Ascending aorta (tissue), 2 donors: ENCODE measurements at regions of chr7 and their contacts with region 1.

Region 1: DNA sequence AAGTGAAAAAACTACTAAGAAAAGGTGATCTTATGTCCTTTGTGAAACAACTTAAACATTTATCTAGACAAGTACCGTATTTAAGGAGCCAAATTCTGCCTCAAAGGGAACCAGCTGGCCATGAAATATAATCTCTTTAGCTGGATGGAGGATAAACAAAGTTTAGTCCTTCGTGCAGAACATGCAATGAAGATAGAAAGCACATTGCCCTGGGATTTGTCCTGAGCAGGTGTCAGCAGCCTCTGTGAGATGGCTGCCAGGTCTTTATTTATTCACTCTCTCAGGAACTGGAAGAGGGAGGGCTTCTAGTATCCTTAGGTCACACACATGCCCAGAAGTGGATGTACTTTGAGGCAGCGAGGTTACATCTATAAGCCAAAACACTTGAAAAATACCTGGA is 57.4 kb upstream of the CASD1 start:
- DNase-seq: no peak
- H3K4me3 ChIP-seq: no peak overlapping the region
- H3K27ac ChIP-seq: no peak overlapping the region
- H3K4me1 ChIP-seq: no peaks in the 10 kb centered on the region
- H3K27me3 ChIP-seq: no peaks in the 10 kb centered on the region
- CTCF ChIP-seq: no peak

Region 2: GRCh38 chr7:94509879-94510581 is 57.8 kb after region 1 on chr7:
- intact Hi-C with region 1: no loop called
- DNase-seq: peak in 1 of 2 donors; percentile 74
- H3K4me3 ChIP-seq: peak overlapping the region; percentile 87 to 98
- H3K27ac ChIP-seq: peak overlapping the region; percentile 87 to 96
- H3K4me1 ChIP-seq: peaks cover 0 to 3% of the 10 kb centered on the region in 2 donors
- H3K27me3 ChIP-seq: no peaks in the 10 kb centered on the region
- CTCF ChIP-seq: peak in 2 of 3 experiments; percentile 8 to 22

Region 3: GRCh38 chr7:94832051-94832450 is 379.8 kb after region 1 on chr7:
- intact Hi-C with region 1: no loop called
- DNase-seq: no peak
- H3K4me3 ChIP-seq: no peak overlapping the region
- H3K27ac ChIP-seq: no peak overlapping the region
- H3K4me1 ChIP-seq: no peaks in the 10 kb centered on the region
- H3K27me3 ChIP-seq: no peaks in the 10 kb centered on the region
- CTCF ChIP-seq: no peak

Region 4: GRCh38 chr7:95246831-95247370 is 794.7 kb after region 1 on chr7:
- intact Hi-C with region 1: loop called (anchors 10 kb)
- DNase-seq: no peak
- H3K4me3 ChIP-seq: peak overlapping the region in 1 of 2 donors; percentile 25
- H3K27ac ChIP-seq: no peak overlapping the region
- H3K4me1 ChIP-seq: no peaks in the 10 kb centered on the region
- H3K27me3 ChIP-seq: no peaks in the 10 kb centered on the region
- CTCF ChIP-seq: peak; percentile 25 to 72 (median 43)

Region 5: DNA sequence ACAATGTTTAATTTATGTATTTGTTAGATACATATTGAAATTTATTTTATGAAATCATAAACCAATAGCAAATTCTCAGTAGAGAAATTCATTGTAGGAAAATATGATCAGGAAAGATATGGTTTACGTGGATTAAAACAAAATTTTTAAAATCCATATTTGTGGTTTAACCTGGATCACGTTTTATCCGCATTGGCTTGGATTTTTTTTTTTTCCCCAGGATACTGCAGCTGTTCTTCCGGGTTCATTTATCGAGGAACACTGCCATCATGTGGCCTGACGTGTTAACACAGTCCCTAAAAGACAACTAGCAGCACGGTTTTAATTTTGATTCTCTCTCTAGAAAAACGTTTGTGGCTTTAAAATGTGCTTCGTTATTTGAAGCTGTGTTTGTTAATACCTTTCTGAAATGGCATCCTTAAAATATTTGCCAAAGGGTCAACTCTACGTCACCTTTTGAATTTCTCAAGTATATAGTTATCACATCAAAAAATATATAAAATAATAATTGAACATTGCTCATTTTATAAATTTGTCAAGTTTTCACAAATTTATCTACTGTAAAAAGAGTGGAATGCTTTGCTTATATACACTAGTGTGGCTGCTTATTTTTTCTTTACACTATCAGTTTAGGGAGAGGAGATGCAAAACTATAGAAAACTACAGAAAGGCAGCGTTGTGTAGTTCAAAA is 1024.8 kb after region 1 on chr7:
- intact Hi-C with region 1: loop called (anchors 2 kb)
- DNase-seq: peak in 1 of 2 donors; percentile 80
- H3K4me3 ChIP-seq: no peak overlapping the region
- H3K27ac ChIP-seq: no peak overlapping the region
- H3K4me1 ChIP-seq: no peaks in the 10 kb centered on the region
- H3K27me3 ChIP-seq: no peaks in the 10 kb centered on the region
- CTCF ChIP-seq: peak in 2 of 3 experiments; percentile 61 to 75